Aorta (tissue), 5 donors: ENCODE measurements at regions of chr1 and their contacts with region 1.

Region 1: GRCh38 chr1:7042322-7043190 is 257.3 kb downstream of the CAMTA1 start:
- DNase-seq: no peak
- ATAC-seq: no peak
- H3K4me3 ChIP-seq: no peak overlapping the region
- H3K27ac ChIP-seq: no peak overlapping the region
- H3K4me1 ChIP-seq: no peaks in the 10 kb centered on the region
- H3K27me3 ChIP-seq: no peaks in the 10 kb centered on the region

Region 2: GRCh38 chr1:7013833-7014639 is 28.5 kb before region 1 on chr1:
- intact Hi-C with region 1: no loop called
- DNase-seq: no peak
- ATAC-seq: peak; percentile 28
- H3K4me3 ChIP-seq: no peak overlapping the region
- H3K27ac ChIP-seq: no peak overlapping the region
- H3K4me1 ChIP-seq: no peaks in the 10 kb centered on the region
- H3K27me3 ChIP-seq: no peaks in the 10 kb centered on the region

Region 3: GRCh38 chr1:7207875-7208646 is 165.5 kb after region 1 on chr1:
- intact Hi-C with region 1: loop called in 1 of 2 experiments (anchors 5 kb)
- DNase-seq: no peak
- ATAC-seq: no peak
- H3K4me3 ChIP-seq: no peak overlapping the region
- H3K27ac ChIP-seq: no peak overlapping the region
- H3K4me1 ChIP-seq: no peaks in the 10 kb centered on the region
- H3K27me3 ChIP-seq: peaks cover 0 to 2% of the 10 kb centered on the region in 2 donors

Region 4: DNA sequence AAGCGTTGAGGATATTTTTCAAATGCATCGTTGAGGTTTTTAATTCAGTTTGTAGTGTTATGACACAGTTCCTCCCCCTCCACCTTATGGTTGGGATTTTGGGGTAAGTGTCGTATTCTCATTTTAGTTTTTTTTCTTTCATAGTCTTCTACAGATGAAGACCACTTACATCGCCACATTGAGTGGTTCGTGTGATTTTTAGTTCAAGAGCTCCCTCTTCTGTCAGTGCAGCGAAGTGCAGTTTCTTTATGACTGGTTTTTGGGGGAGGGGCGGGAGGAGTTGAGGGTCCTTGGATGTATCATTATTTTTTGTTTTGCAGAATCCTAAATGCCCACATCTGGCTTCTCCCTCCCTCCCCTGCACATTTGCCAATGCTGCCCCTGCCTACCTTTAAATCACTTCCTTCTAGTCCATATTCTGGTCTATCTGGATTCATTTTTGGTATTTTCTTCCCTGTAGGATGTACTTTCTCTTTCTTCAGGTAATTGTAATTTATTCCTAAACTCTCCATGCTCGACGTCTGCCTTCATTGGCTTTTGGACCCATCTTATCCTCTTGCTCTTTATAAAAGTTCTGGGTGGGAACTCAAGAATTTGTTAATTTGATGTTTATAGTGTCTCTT is 175.8 kb after region 1 on chr1:
- intact Hi-C with region 1: no loop called
- DNase-seq: no peak
- ATAC-seq: no peak
- H3K4me3 ChIP-seq: no peak overlapping the region
- H3K27ac ChIP-seq: no peak overlapping the region
- H3K4me1 ChIP-seq: no peaks in the 10 kb centered on the region
- H3K27me3 ChIP-seq: no peaks in the 10 kb centered on the region